GM10248 (cell line): ENCODE measurements at regions of chr12 and their contacts with region 1.

Region 1: DNA sequence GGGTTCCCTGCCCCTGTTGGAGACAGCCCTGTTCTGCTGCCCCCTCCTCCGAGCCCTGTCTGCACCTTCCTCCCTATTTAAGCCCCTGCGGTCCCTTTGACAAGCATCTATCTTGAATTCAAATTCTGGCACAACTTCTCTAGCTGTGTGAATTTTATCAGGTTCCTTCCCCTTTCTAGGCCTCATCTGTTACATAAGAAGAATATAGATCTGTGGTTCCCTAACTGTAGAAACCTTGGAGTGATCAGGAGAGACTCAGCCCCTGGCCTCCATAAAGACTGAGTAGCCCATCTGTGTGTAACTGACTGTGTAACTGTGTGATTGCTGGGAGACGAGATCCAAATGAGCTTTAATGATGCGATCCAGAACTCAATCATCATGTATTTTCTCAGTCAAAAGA is 13.0 kb upstream of the RACGAP1 start:
- DNase-seq: no peak
- CTCF ChIP-seq: no peak

Region 2: DNA sequence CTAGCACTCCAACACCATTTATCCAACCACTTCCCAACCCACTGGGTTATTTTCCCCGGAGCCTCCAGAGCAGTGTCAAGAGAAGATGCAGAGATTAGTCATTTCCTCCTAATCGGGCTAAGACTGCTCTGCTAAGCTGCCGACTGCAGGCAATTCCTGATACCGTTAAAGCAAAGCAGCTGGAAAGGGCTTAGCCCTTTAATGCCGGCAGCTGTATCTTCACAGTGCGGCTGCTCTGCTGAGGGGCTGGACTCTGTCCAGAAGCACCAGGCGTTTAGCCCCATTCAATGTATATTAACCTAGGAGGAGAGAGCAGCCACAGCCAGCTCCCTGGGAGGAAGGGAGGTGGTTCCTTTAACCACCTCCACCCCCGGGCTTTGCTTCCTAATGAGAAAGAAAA is 54.4 kb before region 1 on chr12:
- CTCF ChIA-PET with region 1: interaction called, 17 read pairs
- POLR2A ChIA-PET with region 1: no interaction called
- DNase-seq: peak; percentile 11
- CTCF ChIP-seq: no peak

Region 3: DNA sequence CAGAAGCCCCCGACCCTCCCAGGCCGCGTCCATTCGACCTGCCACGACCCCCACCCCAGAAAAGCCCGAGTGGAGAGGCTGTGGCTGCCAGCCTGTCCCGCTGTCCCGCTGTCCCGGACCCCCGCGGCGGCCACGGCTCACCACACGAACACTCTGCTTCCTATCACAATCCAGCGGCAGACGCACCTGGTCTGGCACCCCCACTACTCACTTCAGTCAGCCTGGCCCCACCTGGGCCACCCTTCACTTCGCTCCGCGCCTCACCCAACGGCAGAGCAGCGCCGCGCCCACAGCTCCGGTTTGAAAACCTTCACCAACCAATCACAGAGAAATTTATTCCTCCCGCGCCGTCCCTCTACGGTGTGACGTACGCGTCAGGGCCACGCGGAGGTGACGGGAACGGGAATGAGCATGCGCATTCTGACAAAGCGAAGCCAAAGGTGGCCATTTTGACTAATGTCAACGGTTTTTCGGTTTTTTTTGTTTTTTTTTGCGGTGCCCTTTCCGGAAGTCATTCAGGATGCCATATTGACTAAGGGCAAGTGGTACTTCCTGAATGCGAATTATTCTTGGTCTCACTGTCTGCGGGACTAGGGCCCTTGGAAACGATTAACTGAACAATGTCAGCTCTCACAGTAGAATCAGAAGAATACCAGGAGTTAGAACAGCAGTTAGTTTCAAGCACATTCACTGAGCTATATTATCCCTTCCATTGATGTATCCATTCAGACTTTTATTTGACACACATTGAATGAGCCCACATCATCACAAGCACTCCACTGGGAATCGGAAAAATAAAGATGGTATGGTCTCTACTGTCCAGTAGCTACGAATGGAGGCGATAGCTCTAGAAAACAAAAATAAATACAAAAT is 12.9 kb before region 1 on chr12 and contains the start of gene RACGAP1:
- CTCF ChIA-PET with region 1: interaction called, 36 read pairs
- POLR2A ChIA-PET with region 1: interaction called, 4 read pairs
- DNase-seq: peak; percentile 98
- CTCF ChIP-seq: no peak

Region 4: GRCh38 chr12:50050410-50051098 is 12.2 kb after region 1 on chr12:
- CTCF ChIA-PET with region 1: interaction called, 125 read pairs
- POLR2A ChIA-PET with region 1: no interaction called
- DNase-seq: no peak
- CTCF ChIP-seq: no peak